ENCODE measurements at regions of chr7 and their contacts with region 1.

Region 1: DNA sequence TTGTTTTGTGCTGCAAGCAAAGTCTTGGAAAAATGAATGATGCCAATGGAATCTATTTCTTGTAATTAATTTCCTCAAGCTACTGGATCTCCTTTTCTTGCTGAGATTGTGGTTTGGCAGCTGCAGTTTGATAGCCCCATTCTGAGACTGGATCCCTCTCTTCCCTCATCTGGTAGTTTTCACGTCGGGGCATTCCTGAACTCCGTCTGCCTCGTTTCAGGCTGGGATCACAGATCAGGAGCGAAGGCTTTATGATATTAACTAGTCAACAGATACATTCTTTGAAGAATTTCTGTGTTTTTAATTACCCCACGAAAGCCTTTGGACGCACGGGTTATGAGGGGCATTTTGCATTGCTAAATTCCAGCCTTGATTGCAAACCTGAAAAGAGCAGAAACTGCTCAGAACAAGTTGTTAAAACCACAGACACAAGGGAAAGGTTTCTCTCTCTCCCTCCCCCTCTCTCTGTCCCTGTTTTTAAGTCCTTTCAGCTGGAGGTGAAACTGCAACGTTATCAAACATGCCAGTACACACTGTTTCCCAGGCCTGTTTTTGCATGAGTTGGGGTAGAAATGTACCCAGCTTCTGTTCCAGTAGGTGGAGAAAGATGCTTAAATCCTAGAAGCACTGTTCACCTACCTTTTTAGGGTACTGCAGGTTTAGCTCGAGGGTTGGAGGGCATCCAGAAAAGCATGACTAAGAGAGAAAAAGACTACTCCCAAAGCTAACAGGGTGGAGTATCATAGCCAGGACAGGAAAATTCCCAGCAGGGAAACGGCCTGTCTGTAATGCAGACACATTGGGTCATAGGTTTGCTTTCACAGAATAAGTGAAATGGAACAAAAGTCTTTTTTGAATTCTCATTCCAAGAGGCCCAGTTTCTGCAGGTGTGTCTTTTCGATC is 124.3 kb downstream of the CUX1 start:
- DNase-seq: no peak
- ATAC-seq: peak; percentile 39

Region 2: GRCh38 chr7:101911800-101912715 is 29.7 kb before region 1 on chr7:
- intact Hi-C with region 1: no loop called
- DNase-seq: no peak
- ATAC-seq: peak; percentile 68

Region 3: GRCh38 chr7:101957744-101958525 is 16.2 kb after region 1 on chr7:
- intact Hi-C with region 1: no loop called
- DNase-seq: no peak
- ATAC-seq: no peak

Region 4: DNA sequence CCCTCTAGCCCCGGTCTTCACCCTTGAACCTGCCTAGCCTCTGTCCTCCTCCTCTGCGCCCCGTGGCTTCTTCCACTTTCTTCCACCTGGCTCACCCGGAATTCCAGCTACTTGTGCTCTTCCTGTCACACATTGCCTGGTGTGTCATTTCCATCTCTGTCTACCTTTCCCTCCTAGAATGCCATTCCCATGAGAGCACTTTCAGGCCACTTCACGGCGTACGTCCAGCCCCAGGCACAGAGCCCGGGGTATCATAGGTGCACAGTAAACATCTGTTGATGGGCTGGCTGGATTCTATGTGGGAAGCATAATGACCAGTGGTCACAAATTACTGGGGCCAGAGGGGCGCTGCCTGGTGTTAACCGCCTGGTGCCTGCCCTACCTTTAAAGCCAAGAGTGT is 37.0 kb after region 1 on chr7:
- intact Hi-C with region 1: no loop called
- DNase-seq: peak; percentile 37
- ATAC-seq: no peak

Region 5: DNA sequence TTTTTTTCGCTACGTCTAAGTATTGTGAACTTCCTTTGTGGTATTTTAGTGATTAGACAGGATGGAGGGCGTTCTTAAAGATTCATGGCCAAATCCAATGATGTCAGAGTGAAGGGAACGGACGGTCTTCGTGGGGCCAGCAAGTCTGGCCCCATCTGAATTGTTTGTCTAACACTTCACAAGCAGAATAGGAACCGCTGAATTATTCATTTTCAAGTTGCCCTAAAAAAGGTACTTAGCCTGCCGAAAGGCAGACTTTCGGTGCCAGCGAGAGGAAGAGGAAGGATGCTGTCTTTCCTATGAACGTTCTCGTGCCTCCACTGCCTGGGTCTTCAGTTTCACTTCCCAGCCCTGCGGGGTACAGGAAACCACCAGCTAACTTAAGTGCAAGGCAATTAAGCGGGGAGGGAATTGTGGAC is 199.2 kb after region 1 on chr7:
- intact Hi-C with region 1: loop called (anchors 10 kb)
- DNase-seq: no peak
- ATAC-seq: no peak